PC-3 (cell line): ENCODE measurements at regions of chr10 and their contacts with region 1.

Region 1: GRCh38 chr10:104274762-104275721 is 6.1 kb downstream of the GSTO2 start:
- DNase-seq: peak; percentile 63
- ATAC-seq: peak; percentile 87
- H3K4me3 ChIP-seq: peak overlapping the region; percentile 66
- H3K27ac ChIP-seq: no peak overlapping the region
- H3K4me1 ChIP-seq: peaks cover 17% of the 10 kb centered on the region
- H3K27me3 ChIP-seq: no peaks in the 10 kb centered on the region
- CTCF ChIP-seq: peak; percentile 83

Region 2: DNA sequence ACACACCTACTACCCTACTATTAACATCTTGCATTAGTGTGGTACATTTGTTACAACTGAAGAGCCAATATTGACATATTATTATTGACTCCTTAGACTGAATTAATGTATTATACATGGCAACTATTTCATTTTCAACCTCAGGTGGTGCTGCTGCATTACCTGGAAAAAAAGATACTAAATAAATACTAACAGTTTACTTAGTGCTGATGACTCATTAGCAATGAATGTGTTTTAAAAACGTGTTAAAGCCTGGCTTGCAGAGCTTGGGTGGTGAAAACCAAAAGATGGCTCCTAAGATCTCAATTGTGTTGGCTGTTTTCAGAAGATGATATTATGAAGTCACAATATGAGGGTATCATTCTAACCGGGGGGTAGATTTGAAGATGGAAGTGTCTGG is 77.7 kb before region 1 on chr10:
- CTCF ChIA-PET with region 1: no interaction called
- POLR2A ChIA-PET with region 1: no interaction called
- intact Hi-C with region 1: loop called (anchors 2 kb)
- DNase-seq: peak; percentile 73
- ATAC-seq: peak; percentile 67
- H3K4me3 ChIP-seq: no peak overlapping the region
- H3K27ac ChIP-seq: no peak overlapping the region
- H3K4me1 ChIP-seq: peaks cover 8% of the 10 kb centered on the region
- H3K27me3 ChIP-seq: no peaks in the 10 kb centered on the region
- CTCF ChIP-seq: 0 out of 2 replicates have a peak, but pooled peaks have one; percentile 24

Region 3: DNA sequence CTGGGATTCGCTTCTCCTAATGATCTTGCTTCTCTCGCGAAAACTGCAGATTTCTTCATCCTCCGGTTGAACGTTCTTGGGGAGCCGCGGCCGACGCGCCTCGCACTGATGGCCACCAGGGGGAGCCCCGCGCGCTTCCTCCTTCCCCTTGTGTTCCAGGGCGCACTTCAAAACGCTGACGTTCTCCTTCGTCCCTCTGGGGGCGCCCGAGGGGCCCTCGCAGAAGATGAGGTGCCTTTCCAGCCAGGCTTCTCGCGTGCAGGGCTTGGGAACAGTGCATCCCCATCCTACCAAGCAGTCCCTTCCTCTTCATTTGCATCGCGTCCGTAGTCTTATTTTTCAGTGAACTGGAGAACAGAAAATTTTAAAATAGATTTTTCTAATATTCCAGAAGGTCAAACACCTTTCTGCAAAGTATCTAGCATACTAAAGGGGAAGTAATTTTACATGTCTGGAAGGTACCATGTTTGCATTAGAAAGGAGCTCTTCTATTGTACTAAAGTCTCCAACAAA is 16.5 kb after region 1 on chr10:
- CTCF ChIA-PET with region 1: interaction called, 10 read pairs
- POLR2A ChIA-PET with region 1: no interaction called
- intact Hi-C with region 1: no loop called
- DNase-seq: peak; percentile 79
- ATAC-seq: peak; percentile 71
- H3K4me3 ChIP-seq: no peak overlapping the region
- H3K27ac ChIP-seq: no peak overlapping the region
- H3K4me1 ChIP-seq: peaks cover 24% of the 10 kb centered on the region
- H3K27me3 ChIP-seq: no peaks in the 10 kb centered on the region
- CTCF ChIP-seq: peak; percentile 98

Region 4: GRCh38 chr10:104300736-104301292 is 25.8 kb after region 1 on chr10:
- CTCF ChIA-PET with region 1: interaction called, 10 read pairs
- POLR2A ChIA-PET with region 1: no interaction called
- intact Hi-C with region 1: no loop called
- DNase-seq: peak; percentile 79
- ATAC-seq: peak; percentile 82
- H3K4me3 ChIP-seq: no peak overlapping the region
- H3K27ac ChIP-seq: peak overlapping the region; percentile 94
- H3K4me1 ChIP-seq: peaks cover 29% of the 10 kb centered on the region
- H3K27me3 ChIP-seq: no peaks in the 10 kb centered on the region
- CTCF ChIP-seq: peak; percentile 41; the same call in 1 of the 2 replicates

Region 5: DNA sequence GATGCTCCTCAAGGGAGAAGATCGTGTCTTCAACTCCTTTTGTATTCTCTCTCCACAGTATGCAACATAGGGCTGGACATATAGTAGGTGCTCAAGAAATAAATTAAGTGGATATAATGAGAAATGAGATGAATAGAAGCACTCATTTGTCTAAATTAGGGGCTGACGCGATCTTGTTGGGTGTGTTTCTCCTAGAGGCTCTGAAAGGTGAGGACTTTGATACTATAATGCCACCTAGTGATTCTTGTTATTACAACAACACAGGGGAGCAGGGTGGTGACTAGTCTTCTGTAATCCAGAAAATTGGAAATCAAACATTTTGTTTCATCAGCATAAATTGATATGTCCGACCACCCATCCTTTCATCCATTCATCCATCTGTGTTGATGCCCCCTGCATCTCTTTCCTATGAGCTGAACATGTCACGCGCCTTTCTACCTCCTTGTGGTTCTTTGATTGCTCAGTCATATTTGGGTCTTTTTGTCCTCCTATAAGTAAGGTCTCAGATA is 75.1 kb after region 1 on chr10:
- CTCF ChIA-PET with region 1: interaction called, 13 read pairs
- POLR2A ChIA-PET with region 1: no interaction called
- intact Hi-C with region 1: no loop called
- DNase-seq: peak; percentile 72
- ATAC-seq: peak; percentile 71
- H3K4me3 ChIP-seq: peak overlapping the region; percentile 59
- H3K27ac ChIP-seq: peak overlapping the region; percentile 92
- H3K4me1 ChIP-seq: peaks cover 41% of the 10 kb centered on the region
- H3K27me3 ChIP-seq: 0 out of 2 replicates have a peak, but pooled peaks cover 5% of the 10 kb centered on the region
- CTCF ChIP-seq: peak; percentile 81